ENCODE measurements at regions of chr2 and their contacts with region 1.

Region 1: DNA sequence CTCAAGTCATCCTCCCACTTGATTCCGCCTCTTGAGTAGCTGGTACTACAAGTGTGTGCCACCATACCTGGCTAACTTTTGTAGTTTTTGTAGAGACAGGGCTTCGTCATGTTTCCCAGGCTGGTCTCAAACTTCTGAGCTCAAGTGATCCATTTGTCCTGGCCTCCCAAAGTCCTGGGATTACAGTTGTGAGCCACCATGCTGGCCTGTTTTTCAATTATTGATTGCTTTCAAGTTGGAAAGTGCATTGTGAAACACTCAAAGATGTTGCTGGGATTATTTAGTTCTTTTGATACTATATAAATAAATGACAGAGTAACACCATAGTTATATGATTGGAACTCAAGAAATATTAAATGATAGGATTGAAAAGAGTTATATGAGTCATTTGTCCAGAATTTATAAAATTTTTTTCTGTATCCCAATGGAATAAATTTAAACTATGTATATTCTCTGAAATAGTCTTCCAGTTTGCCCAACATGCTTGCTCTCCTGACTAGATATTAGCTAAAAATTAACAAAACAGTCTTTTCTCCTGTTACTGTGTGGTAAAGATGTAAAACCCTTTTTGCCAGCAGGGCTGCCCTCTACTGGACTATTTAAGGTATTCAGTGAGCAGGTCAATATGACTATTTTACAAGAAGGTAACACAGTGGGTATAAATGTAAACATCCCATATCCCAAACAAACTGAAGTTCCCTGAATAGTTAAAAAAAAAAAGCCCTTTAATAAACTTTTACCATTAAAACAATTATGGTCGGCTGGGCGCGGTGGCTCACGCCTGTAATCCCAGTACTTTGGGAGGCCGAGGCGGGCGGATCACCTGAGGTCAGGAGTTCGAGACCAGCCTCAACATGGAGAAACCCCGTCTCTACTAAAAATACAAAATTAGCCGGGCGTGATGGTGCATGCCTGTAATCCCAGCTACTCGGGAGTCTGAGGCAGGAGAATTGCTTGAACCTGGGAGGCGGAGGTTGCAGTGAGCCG is 42.7 kb downstream of the ACSL3 start:
- DNase-seq: no peak
- ATAC-seq: peak; percentile 87
- H3K4me3 ChIP-seq: no peak overlapping the region
- H3K27ac ChIP-seq: no peak overlapping the region
- H3K4me1 ChIP-seq: peaks cover 0 to 7% of the 10 kb centered on the region in 2 experiments; a peak in 1 of 4 replicates
- H3K27me3 ChIP-seq: no peaks in the 10 kb centered on the region
- CTCF ChIP-seq: peak; percentile 72 to 88 (median 79)
- POLR2A ChIP-seq: no peak
- RAD21 ChIP-seq: peak; percentile 85

Region 2: DNA sequence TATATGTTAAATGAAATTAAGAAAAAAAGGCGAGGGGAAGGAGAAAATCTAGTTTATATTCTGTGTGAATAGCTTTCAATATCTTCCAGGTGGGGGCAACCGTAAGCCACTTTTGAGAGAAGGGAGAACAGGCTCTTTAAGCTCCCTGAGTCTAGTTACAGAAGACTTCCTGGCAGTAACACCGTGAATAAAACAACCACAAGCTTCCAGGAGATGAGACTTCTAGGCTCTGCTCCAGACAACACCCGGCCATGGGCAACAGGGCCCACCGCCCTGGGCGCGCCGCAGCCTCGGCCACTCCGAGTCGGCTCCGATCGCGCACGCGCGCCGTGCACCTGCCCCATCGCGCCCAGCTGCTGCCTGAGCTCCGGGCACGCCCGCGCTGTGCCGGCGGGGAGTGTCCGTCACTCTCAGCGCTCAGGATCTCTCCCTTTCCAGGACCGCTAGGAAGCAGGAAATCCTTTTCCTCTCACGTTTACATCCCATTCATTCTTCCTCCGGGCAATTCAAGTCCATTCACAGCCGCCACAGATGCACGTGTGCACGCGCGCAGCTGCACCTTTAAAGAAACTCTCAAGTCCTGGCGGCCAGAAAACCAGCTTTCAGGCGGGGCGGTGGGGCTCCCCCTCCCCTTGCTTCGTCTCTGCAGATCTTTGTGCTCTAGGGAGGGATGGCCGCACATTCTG is 585.4 kb before region 1 on chr2:
- CTCF ChIA-PET with region 1: no interaction called
- POLR2A ChIA-PET with region 1: no interaction called
- RAD21 ChIA-PET with region 1: no interaction called
- intact Hi-C with region 1: loop called (anchors 5 kb)
- DNase-seq: peak; percentile 35
- ATAC-seq: peak; percentile 98
- H3K4me3 ChIP-seq: peak overlapping the region; percentile 36 to 58
- H3K27ac ChIP-seq: no peak overlapping the region
- H3K4me1 ChIP-seq: peaks cover 0 to 8% of the 10 kb centered on the region in 2 experiments; a peak in 2 of 4 replicates
- H3K27me3 ChIP-seq: peaks cover 28% of the 10 kb centered on the region
- CTCF ChIP-seq: peak; percentile 39 to 74 (median 54)
- POLR2A ChIP-seq: no peak
- RAD21 ChIP-seq: peak; percentile 86

Region 3: GRCh38 chr2:222582928-222583327 is 320.6 kb before region 1 on chr2:
- CTCF ChIA-PET with region 1: no interaction called
- POLR2A ChIA-PET with region 1: no interaction called
- RAD21 ChIA-PET with region 1: no interaction called
- intact Hi-C with region 1: no loop called
- DNase-seq: no peak
- ATAC-seq: peak; percentile 75
- H3K4me3 ChIP-seq: no peak overlapping the region
- H3K27ac ChIP-seq: no peak overlapping the region
- H3K4me1 ChIP-seq: no peaks in the 10 kb centered on the region
- H3K27me3 ChIP-seq: no peaks in the 10 kb centered on the region
- CTCF ChIP-seq: peak in 2 of 3 experiments; percentile 29 to 41; a peak in 4 of 6 replicates
- POLR2A ChIP-seq: no peak
- RAD21 ChIP-seq: 0 out of 2 replicates have a peak, but pooled peaks have one; percentile 15

Region 4: DNA sequence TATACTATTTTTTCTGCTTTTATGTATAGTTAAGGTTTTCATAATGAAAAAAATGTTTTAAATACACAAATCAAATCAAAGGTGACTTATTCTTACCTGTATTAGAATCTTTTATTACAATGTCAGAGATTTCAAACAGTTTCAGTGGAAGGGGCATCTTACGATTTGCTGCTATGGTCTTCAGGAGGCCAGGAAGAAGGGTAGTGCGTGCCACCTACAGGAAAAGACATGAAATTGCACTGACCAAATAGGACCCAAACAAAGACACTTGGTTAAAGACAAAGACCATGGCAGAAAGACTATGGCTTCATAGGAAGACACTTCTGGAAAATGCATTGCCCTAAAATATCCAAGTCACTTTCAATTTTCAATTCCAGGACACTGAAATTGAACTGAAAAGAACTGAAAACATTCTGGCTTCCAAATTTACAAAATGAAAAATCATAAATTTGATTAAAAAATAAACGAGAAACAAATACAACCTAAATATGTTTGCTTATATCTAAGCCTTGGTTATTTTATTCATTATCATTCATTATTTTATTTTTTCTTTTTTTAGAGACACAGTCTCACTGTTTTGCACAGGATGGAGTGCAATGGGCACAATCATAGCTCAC is 289.7 kb before region 1 on chr2:
- CTCF ChIA-PET with region 1: no interaction called
- POLR2A ChIA-PET with region 1: no interaction called
- RAD21 ChIA-PET with region 1: no interaction called
- intact Hi-C with region 1: no loop called
- DNase-seq: peak; percentile 15
- ATAC-seq: peak; percentile 92
- H3K4me3 ChIP-seq: no peak overlapping the region
- H3K27ac ChIP-seq: no peak overlapping the region
- H3K4me1 ChIP-seq: no peaks in the 10 kb centered on the region
- H3K27me3 ChIP-seq: no peaks in the 10 kb centered on the region
- CTCF ChIP-seq: peak; percentile 36 to 76 (median 68); a peak in 5 of 6 replicates
- POLR2A ChIP-seq: no peak
- RAD21 ChIP-seq: peak; percentile 67

Region 5: DNA sequence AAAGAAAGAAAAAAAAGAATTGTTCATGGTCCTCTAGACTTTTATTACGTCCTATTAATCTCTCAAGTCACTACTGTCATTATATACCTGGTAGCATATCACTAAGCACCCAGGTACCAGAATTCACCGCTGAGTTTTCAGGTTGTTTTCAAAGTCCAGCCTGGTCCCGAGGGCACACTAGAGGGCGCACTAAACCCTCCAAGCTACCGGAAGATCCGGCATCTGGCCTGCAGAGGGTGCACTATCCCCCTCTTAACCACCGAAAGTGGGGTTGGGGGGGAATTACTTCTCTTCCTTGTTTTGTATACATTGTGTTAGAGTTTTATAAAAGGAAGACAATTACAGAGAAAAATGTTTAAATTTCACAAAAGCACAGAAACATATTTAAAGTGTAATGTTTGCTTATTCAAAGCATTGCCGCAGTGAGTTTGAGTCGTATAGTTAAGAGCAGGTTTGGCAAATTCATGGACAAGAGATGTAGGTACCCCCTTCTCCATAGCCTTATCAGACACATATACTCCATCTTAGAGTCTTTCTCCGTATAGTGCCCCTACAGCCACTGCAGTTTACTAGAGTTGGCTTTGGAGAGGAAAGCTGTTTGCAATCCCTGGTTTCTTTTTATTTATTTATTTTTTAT is 212.8 kb before region 1 on chr2:
- CTCF ChIA-PET with region 1: interaction called, 8 read pairs
- POLR2A ChIA-PET with region 1: no interaction called
- RAD21 ChIA-PET with region 1: no interaction called
- intact Hi-C with region 1: loop called (anchors 1 kb)
- DNase-seq: peak; percentile 77
- ATAC-seq: peak; percentile 93
- H3K4me3 ChIP-seq: no peak overlapping the region
- H3K27ac ChIP-seq: no peak overlapping the region
- H3K4me1 ChIP-seq: peaks cover 0 to 7% of the 10 kb centered on the region in 2 experiments; a peak in 2 of 4 replicates
- H3K27me3 ChIP-seq: no peaks in the 10 kb centered on the region
- CTCF ChIP-seq: peak; percentile 100
- POLR2A ChIP-seq: no peak
- RAD21 ChIP-seq: peak; percentile 82

Region 6: DNA sequence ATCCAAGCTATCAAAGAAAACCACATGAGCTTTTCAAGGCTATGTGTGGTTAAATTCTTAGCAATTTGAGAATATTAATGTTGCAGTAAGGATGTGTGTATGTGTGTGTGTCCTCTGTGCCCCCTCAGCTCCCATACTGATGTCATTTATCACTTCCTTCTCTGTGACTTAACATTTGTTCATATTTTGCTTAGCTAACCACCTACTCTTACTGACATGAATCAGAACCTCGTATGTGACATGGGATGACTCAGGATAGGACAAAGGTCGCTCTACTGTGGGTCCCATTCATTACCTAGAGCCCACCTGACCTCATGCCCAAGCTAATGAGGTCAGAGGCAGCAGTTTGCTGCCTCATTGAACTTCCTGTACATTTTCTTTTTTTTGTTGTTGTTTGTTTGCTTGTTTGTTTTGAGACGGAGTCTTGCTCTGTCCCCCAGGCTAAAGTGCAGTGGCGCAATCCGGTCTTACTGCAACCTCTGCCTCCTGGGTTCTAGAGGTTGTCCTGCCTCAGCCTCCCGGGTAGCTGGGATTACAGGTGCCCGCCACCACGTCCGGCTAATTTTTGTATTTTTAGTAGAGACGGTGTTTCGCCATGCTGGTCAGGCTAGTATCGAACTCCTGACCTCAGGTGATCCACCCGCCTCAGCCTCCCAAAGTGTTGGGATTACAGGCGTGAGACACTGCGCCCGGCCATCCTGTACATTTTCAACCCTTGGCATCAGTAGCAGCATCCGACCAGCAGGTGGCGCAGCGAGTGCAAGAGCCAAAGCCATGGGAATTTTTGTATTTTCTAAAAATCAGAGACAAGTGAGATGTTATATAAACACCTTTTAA is 195.6 kb before region 1 on chr2:
- CTCF ChIA-PET with region 1: interaction called, 52 read pairs
- POLR2A ChIA-PET with region 1: no interaction called
- RAD21 ChIA-PET with region 1: interaction called in 1 of 2 experiments, 7 read pairs
- intact Hi-C with region 1: loop called (anchors 1 kb)
- DNase-seq: peak; percentile 64
- ATAC-seq: peak; percentile 55
- H3K4me3 ChIP-seq: no peak overlapping the region
- H3K27ac ChIP-seq: no peak overlapping the region
- H3K4me1 ChIP-seq: peaks cover 8 to 24% of the 10 kb centered on the region in 2 experiments; a peak in 3 of 4 replicates
- H3K27me3 ChIP-seq: no peaks in the 10 kb centered on the region
- CTCF ChIP-seq: peak; percentile 87 to 90 (median 89)
- POLR2A ChIP-seq: no peak
- RAD21 ChIP-seq: peak; percentile 84

Region 7: GRCh38 chr2:222797261-222797660 is 106.3 kb before region 1 on chr2:
- CTCF ChIA-PET with region 1: interaction called, 8 read pairs
- POLR2A ChIA-PET with region 1: no interaction called
- RAD21 ChIA-PET with region 1: no interaction called
- intact Hi-C with region 1: loop called (anchors 1 kb)
- DNase-seq: no peak
- ATAC-seq: peak; percentile 63; the same call in 1 of the 2 replicates
- H3K4me3 ChIP-seq: no peak overlapping the region
- H3K27ac ChIP-seq: no peak overlapping the region
- H3K4me1 ChIP-seq: no peaks in the 10 kb centered on the region
- H3K27me3 ChIP-seq: no peaks in the 10 kb centered on the region
- CTCF ChIP-seq: peak; percentile 53 to 66 (median 53); a peak in 5 of 6 replicates
- POLR2A ChIP-seq: no peak
- RAD21 ChIP-seq: peak; percentile 64

Region 8: DNA sequence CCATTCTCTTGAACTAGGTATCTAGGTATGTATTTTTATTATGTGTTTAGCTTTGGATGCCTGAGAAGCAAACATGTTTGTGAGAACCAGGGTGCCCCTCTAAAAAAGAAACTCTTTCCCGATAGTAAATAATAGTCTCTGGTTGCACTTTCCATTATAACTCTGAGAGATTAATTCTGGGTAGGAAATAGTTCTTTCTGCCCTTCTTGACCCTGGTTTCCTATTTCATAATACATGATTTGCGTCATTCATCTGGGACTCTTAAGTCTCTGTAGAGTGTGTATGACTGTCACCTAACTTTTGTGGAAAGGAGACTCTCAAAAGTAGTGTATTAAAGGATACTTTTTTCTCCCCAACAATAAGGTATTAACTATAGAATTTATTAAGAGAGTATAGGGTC is 11.2 kb before region 1 on chr2:
- CTCF ChIA-PET with region 1: interaction called, 10 read pairs
- POLR2A ChIA-PET with region 1: no interaction called
- RAD21 ChIA-PET with region 1: no interaction called
- intact Hi-C with region 1: no loop called
- DNase-seq: no peak
- ATAC-seq: no peak
- H3K4me3 ChIP-seq: no peak overlapping the region
- H3K27ac ChIP-seq: no peak overlapping the region
- H3K4me1 ChIP-seq: peaks cover 3 to 5% of the 10 kb centered on the region in 2 experiments; a peak in 2 of 4 replicates
- H3K27me3 ChIP-seq: no peaks in the 10 kb centered on the region
- CTCF ChIP-seq: no peak
- POLR2A ChIP-seq: no peak
- RAD21 ChIP-seq: no peak

Region 9: DNA sequence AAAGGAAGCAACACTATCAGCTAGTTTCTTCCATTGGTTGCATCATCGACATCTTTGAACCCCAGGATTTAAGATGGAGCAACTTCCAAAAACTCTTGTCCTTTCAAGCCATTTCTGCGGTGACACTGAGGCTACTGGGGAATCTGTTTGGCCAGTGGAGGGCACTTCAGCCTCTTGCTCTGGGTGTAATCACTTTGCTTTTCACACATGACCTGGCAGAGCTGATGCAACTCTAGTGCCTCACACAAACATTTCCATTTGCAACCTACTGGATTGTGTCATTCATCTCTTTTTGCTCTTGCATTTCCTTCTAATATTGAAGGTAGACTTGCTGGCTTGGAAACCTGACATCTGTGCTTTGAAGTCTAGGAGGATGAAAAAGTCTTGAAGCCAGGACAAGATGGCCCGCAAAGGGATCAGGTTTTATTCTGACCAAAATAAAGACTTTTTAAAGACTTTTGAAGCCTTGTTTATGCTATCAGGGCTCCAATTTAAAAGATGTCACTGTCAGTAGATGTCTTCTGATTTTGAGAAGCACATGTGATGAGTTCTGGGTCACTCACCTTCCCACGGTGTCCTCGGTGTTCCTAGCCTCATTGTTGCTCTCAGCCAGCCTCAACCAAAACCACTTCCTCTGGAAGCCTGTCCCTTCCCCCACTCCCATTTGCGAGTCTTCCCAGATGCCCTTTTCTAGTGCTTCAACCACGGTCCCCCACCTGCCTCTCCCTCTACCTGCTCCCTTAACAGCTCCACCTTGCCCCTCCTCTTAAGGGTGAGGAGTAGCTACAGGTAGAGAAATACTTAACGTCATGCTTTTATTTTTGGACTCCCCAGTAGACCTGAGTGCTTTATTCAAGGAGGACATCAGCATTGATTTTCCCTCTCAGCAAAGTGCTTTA is 78.7 kb after region 1 on chr2:
- CTCF ChIA-PET with region 1: no interaction called
- POLR2A ChIA-PET with region 1: no interaction called
- RAD21 ChIA-PET with region 1: no interaction called
- intact Hi-C with region 1: no loop called
- DNase-seq: peak; percentile 65
- ATAC-seq: peak; percentile 67
- H3K4me3 ChIP-seq: no peak overlapping the region
- H3K27ac ChIP-seq: no peak overlapping the region
- H3K4me1 ChIP-seq: peaks cover 0 to 4% of the 10 kb centered on the region in 2 experiments; a peak in 1 of 4 replicates
- H3K27me3 ChIP-seq: no peaks in the 10 kb centered on the region
- CTCF ChIP-seq: peak; percentile 39 to 61 (median 52); a peak in 5 of 6 replicates
- POLR2A ChIP-seq: no peak
- RAD21 ChIP-seq: peak; percentile 85

Region 10: DNA sequence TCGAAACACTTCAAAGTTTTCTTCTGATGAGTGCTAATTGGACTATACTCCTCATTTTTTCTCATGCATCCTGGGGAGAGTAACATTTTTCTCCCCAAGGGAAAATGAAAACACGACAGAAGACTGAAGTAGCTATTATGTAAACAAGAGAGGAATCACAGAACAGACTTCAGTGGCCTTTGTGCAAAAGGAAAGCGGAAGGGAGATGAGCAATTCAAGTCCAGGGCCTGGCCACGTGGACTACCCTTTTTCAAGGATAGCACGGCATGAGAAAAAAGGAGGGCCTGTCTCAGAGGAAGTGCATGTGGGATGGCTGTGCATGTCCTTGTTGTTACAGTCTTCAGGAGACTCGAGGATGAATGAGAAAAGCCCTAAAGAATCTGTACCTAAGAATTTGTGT is 104.6 kb after region 1 on chr2:
- CTCF ChIA-PET with region 1: no interaction called
- POLR2A ChIA-PET with region 1: no interaction called
- RAD21 ChIA-PET with region 1: no interaction called
- intact Hi-C with region 1: no loop called
- DNase-seq: no peak
- ATAC-seq: no peak
- H3K4me3 ChIP-seq: no peak overlapping the region
- H3K27ac ChIP-seq: no peak overlapping the region
- H3K4me1 ChIP-seq: no peaks in the 10 kb centered on the region
- H3K27me3 ChIP-seq: no peaks in the 10 kb centered on the region
- CTCF ChIP-seq: no peak
- POLR2A ChIP-seq: no peak
- RAD21 ChIP-seq: no peak

Measured in HCT116 (cell line).